Sigmoid colon (tissue), 7 donors: ENCODE measurements at regions of chr2 and their contacts with region 1.

Region 1: DNA sequence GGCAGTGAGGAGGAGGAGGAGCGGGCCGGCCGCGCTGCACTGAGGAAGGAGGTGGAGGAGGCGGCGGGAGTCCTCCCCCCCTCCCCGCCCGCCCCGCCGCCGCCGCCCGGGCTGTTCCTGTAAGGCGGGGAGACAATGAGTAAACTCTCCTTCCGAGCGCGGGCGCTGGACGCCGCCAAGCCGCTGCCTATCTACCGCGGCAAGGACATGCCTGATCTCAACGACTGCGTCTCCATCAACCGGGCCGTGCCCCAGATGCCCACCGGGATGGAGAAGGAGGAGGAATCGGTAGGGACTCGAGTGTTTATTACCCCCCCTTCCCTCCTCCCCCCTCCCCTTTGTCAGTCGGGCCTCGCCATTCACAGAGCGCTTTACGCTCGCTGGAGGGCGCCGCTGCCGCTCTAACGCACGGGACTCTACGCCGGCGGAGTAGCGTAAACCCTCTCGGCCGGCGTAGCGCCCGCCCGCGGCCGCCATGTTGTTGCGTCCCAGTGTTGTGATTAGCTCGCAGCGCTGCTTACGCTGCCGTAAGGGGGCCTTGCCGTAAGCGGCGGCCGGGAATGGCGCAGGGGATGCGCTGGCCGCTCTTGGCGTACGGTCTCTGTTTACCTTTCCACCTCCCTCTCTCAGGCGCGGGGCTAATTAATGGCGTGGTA is 460 bp downstream of the EPC2 start:
- DNase-seq: peak; percentile 97
- H3K4me3 ChIP-seq: peak overlapping the region; percentile 84 to 92 (median 89)
- H3K27ac ChIP-seq: peak overlapping the region; percentile 98 to 99 (median 98)
- H3K4me1 ChIP-seq: peaks cover 0 to 34% (median 22%) of the 10 kb centered on the region in 4 donors
- H3K27me3 ChIP-seq: no peaks in the 10 kb centered on the region
- CTCF ChIP-seq: peak in 1 of 4 experiments; percentile 25
- EP300 ChIP-seq: no peak
- POLR2A ChIP-seq: no peak

Region 2: GRCh38 chr2:147843864-147844696 is 800.9 kb before region 1 on chr2:
- intact Hi-C with region 1: loop called (anchors 10 kb)
- DNase-seq: peak; percentile 96
- H3K4me3 ChIP-seq: peak overlapping the region; percentile 79 to 87 (median 80)
- H3K27ac ChIP-seq: peak overlapping the region; percentile 95 to 99 (median 98)
- H3K4me1 ChIP-seq: peaks cover 0 to 38% (median 20%) of the 10 kb centered on the region in 4 donors
- H3K27me3 ChIP-seq: no peaks in the 10 kb centered on the region
- CTCF ChIP-seq: peak in 3 of 4 experiments; percentile 9 to 39 (median 28)
- EP300 ChIP-seq: peak in 1 of 4 donors; percentile 20
- POLR2A ChIP-seq: peak in 1 of 2 donors; percentile 24

Region 3: DNA sequence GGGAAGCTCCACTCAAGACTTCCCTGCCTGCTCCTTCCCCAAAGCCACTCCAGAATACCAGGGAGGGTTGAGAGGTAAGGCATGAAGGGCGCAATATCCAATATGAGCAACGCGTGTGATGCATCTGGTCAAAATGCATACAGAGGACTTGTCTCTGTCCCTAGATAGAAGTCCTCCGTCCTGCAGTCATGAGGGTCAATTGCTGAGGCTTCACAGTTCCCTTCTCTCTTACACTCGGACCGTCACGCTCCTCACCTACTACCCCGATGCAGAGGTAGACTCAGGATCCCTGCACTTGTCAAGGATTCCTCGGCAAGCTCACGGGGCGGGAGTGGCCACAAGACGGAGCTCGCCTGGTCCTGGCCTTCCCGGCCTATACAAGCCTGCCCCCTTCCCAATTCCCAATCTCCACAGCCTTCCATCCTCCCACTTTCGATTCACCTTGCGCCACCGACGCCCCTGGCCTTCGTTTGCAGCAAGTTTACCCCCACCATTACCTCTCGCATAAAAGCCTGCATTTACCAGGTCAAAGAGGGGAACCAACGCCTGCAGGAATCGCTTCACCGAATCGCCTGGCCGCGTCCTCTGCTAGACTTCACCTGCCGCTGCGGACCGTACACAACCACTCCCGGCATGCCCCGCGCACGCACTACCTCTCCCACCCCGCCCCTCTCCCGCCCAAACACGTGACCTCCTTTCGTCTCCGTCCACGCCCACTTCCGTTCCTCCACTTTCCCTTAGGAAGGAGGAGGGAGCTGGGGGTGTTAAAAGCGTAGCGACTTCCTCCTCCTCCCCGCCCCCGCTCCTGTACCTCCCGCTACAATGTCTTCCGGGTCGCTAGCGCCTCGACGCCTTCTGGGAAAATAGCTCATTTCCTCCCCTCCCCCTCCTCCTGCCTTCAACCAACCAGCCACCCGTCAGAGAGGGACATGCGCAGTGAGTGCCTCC is 624.6 kb before region 1 on chr2 and contains the start of gene ORC4:
- intact Hi-C with region 1: loop called (anchors 10 kb)
- DNase-seq: peak; percentile 100
- H3K4me3 ChIP-seq: peak within 1 kb of the TSS; percentile 84 to 97 (median 86)
- H3K27ac ChIP-seq: peak within 1 kb of the TSS; percentile 97 to 98 (median 98)
- H3K4me1 ChIP-seq: peaks cover 0 to 52% (median 42%) of the 10 kb centered on the region in 4 donors
- H3K27me3 ChIP-seq: no peaks in the 10 kb centered on the region
- CTCF ChIP-seq: peak in 2 of 4 experiments; percentile 31 to 36
- EP300 ChIP-seq: peak in 1 of 4 donors; percentile 75
- POLR2A ChIP-seq: peak; percentile 22 to 66
- total RNA-seq, gene ORC4: 61.8 to 89.5 (median 76.6) TPM

Region 4: GRCh38 chr2:148813603-148814065 is 168.6 kb after region 1 on chr2:
- intact Hi-C with region 1: loop called (anchors 1 kb)
- DNase-seq: no peak
- H3K4me3 ChIP-seq: no peak overlapping the region
- H3K27ac ChIP-seq: peak overlapping the region in 2 of 4 donors; percentile 25 to 69
- H3K4me1 ChIP-seq: peaks cover 0 to 57% (median 47%) of the 10 kb centered on the region in 4 donors
- H3K27me3 ChIP-seq: no peaks in the 10 kb centered on the region
- CTCF ChIP-seq: no peak
- EP300 ChIP-seq: no peak
- POLR2A ChIP-seq: no peak

Region 5: DNA sequence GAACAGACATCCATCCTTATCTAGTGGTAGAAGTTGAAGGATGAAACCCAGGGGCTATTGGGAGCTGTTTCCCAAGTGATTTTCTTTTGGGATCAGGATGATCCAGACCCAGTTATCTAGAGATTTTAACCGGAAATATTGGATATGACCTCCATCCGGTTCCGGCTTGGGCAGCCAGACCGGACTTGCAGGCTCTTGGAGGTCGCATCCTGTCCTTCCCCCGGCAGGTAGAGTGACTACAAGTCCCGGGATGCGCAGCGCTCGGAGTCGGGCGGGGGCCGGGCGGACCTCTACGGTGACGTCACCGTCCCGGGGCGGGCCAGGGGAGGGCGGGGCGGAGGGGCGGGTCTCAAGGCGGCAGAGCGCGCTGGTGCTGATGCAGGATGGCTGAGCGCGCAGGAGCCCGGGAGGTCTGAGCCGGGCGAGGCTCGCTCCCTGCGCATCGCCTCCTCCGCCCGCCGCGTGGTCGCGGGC is 229.9 kb after region 1 on chr2 and contains the start of gene KIF5C:
- intact Hi-C with region 1: loop called (anchors 10 kb)
- DNase-seq: peak; percentile 90
- H3K4me3 ChIP-seq: peak within 1 kb of the TSS; percentile 28 to 54 (median 46)
- H3K27ac ChIP-seq: no peak within 1 kb of the TSS
- H3K4me1 ChIP-seq: peaks cover 0 to 29% (median 23%) of the 10 kb centered on the region in 4 donors
- H3K27me3 ChIP-seq: peaks cover 16 to 52% (median 21%) of the 10 kb centered on the region in 3 donors
- CTCF ChIP-seq: no peak
- EP300 ChIP-seq: no peak
- POLR2A ChIP-seq: no peak
- total RNA-seq, gene KIF5C: 7.3 to 11.1 (median 7.9) TPM

Region 6: DNA sequence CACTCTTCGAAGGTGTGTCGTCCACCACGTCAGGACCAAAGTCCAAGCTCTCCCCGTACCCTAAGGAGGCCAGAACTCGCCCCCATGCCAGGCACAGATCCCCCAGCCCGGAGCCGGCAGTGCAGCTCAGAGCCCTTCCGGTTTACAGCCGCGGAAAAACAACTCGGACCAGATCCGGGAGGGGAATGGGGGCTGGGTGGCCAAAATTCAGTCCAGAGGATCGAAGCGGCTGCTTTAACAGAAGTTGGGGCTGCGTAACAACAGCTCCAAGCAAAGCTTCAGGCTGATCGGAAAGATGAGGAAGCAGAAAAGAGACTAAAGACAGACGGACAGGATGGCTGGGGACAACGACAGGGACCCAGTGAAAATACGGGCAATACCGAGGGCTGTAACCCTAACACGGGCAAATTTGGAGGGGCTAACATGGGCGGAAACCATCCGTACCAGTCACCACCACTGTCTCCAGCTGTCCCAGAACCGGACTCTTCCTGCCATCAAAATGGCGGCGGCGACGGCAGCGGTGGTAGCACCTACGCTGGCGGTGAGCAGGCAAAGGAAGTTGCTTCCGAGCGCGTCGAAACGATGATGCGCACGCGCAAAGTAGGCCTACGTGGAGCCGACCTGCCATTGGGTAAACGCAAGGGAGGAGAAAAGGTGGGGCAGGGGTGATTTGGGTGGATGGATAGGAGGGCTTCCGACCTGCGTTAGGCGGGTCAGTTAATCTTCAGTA is 942.4 kb after region 1 on chr2 and contains the start of gene MMADHC:
- intact Hi-C with region 1: loop called (anchors 10 kb)
- DNase-seq: peak; percentile 97
- H3K4me3 ChIP-seq: peak within 1 kb of the TSS; percentile 74 to 82 (median 75)
- H3K27ac ChIP-seq: peak within 1 kb of the TSS; percentile 87 to 95 (median 94)
- H3K4me1 ChIP-seq: peaks cover 0 to 38% (median 27%) of the 10 kb centered on the region in 4 donors
- H3K27me3 ChIP-seq: no peaks in the 10 kb centered on the region
- CTCF ChIP-seq: no peak
- EP300 ChIP-seq: no peak
- POLR2A ChIP-seq: peak; percentile 68 to 76
- total RNA-seq, gene MMADHC: 77.8 to 172 (median 138) TPM